ENCODE measurements at regions of chr19 and their contacts with region 1.

Region 1: GRCh38 chr19:2457394-2458037 is 757 bp upstream of the LMNB2 start:
- DNase-seq: no peak
- ATAC-seq: no peak

Region 2: GRCh38 chr19:2427429-2428320 is 29.8 kb before region 1 on chr19 and contains the start of gene TIMM13:
- intact Hi-C with region 1: loop called (anchors 1 kb)
- DNase-seq: peak; percentile 99
- ATAC-seq: peak; percentile 95
- total RNA-seq, gene TIMM13: 86.9 TPM

Measured in Right ventricle myocardium inferior (tissue), 1 donor.